Aorta (tissue), 5 donors: ENCODE measurements at regions of chr2 and their contacts with region 1.

Region 1: GRCh38 chr2:96868555-96869280 is 1.2 kb downstream of the SEMA4C start:
- DNase-seq: peak; percentile 94 to 95
- ATAC-seq: peak; percentile 83
- H3K4me3 ChIP-seq: peak overlapping the region; percentile 89 to 96
- H3K27ac ChIP-seq: peak overlapping the region; percentile 81 to 84
- H3K4me1 ChIP-seq: no peaks in the 10 kb centered on the region
- H3K27me3 ChIP-seq: no peaks in the 10 kb centered on the region

Region 2: GRCh38 chr2:96891491-96892333 is 23.0 kb after region 1 on chr2:
- intact Hi-C with region 1: loop called in 1 of 2 experiments (anchors 2 kb)
- DNase-seq: peak in 1 of 2 donors; percentile 82
- ATAC-seq: peak; percentile 66
- H3K4me3 ChIP-seq: no peak overlapping the region
- H3K27ac ChIP-seq: peak overlapping the region in 1 of 2 donors; percentile 58
- H3K4me1 ChIP-seq: no peaks in the 10 kb centered on the region
- H3K27me3 ChIP-seq: no peaks in the 10 kb centered on the region